ENCODE measurements at regions of chr1 and their contacts with region 1.

Region 1: GRCh38 chr1:51878616-51879336 is at the start of gene NRDC:
- DNase-seq: peak; percentile 99 to 100 (median 100)
- ATAC-seq: peak; percentile 83
- H3K4me3 ChIP-seq: peak within 1 kb of the TSS; percentile 78
- H3K27ac ChIP-seq: peak within 1 kb of the TSS; percentile 98
- H3K4me1 ChIP-seq: peaks cover 4 to 14% of the 10 kb centered on the region in 2 experiments; a peak in 4 of 5 replicates
- H3K27me3 ChIP-seq: no peaks in the 10 kb centered on the region
- CTCF ChIP-seq: 0 out of 6 replicates have a peak, but pooled peaks of 1 of the 3 experiments have one; percentile 7
- EP300 ChIP-seq: peak; percentile 47
- POLR2A ChIP-seq: peak; percentile 94
- RAD21 ChIP-seq: no peak
- polyA plus RNA-seq, gene NRDC: 135 to 149 TPM

Region 2: GRCh38 chr1:50968158-50968820 is 910.5 kb before region 1 on chr1:
- CTCF ChIA-PET with region 1: no interaction called
- POLR2A ChIA-PET with region 1: no interaction called
- in situ Hi-C with region 1: no loop called
- intact Hi-C with region 1: loop called (anchors 5 kb)
- DNase-seq: peak; percentile 93 to 97 (median 96)
- ATAC-seq: peak; percentile 75
- H3K4me3 ChIP-seq: peak overlapping the region; percentile 78
- H3K27ac ChIP-seq: peak overlapping the region; percentile 92
- H3K4me1 ChIP-seq: peaks cover 3 to 15% of the 10 kb centered on the region in 2 experiments; a peak in 3 of 5 replicates
- H3K27me3 ChIP-seq: no peaks in the 10 kb centered on the region
- CTCF ChIP-seq: peak; percentile 42 to 67 (median 59); a peak in 4 of 6 replicates
- EP300 ChIP-seq: peak; percentile 55
- POLR2A ChIP-seq: peak; percentile 89
- RAD21 ChIP-seq: peak; percentile 40 to 50; a peak in 3 of 4 replicates

Region 3: GRCh38 chr1:51814513-51814912 is 64.3 kb before region 1 on chr1:
- CTCF ChIA-PET with region 1: no interaction called
- POLR2A ChIA-PET with region 1: no interaction called
- in situ Hi-C with region 1: no loop called
- intact Hi-C with region 1: loop called (anchors 5 kb)
- DNase-seq: no peak
- ATAC-seq: no peak
- H3K4me3 ChIP-seq: no peak overlapping the region
- H3K27ac ChIP-seq: no peak overlapping the region
- H3K4me1 ChIP-seq: no peaks in the 10 kb centered on the region
- H3K27me3 ChIP-seq: no peaks in the 10 kb centered on the region
- CTCF ChIP-seq: no peak
- EP300 ChIP-seq: no peak
- POLR2A ChIP-seq: no peak
- RAD21 ChIP-seq: no peak

Region 4: DNA sequence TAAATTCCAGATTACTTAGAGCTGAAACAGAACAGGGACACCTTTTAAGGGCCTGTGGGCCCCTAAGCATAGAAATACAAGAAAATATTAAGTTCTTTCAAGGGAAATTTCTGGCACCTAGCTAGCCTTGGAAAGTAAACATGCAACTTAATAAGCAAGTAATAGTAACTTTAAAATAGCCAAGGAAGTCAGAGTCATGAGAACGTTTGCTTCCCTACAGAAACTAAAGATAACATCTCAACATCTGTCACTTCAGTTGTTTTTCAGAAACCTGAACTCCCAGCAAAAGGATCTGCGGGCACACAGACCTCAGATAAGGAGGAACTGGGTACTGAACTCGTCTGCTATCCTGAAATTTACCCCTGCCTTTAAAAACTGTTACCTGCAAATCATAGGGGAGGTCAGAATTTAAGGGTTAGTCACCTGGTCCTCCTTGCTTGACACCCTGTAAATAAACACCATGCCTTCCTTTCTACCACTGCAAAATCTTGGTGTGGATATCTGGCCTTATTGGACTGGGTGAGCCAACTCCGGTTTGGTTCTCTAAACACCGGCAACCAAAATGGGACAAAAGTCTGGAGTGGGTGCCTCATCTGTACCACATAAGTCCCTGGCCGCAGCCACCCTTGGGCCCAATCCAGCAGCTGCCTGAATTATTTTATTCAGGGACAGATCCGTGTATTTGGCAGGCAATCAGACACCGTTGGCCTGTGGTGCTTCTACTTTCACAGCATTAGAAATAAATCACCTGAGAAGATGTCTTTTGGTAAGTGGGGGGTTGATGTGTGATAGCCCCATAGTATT is 28.2 kb before region 1 on chr1:
- CTCF ChIA-PET with region 1: no interaction called
- POLR2A ChIA-PET with region 1: interaction called, 12 read pairs
- in situ Hi-C with region 1: no loop called
- intact Hi-C with region 1: loop called (anchors 2 kb)
- DNase-seq: peak in 3 of 4 experiments; percentile 28 to 83 (median 51)
- ATAC-seq: peak; percentile 78
- H3K4me3 ChIP-seq: 0 out of 2 replicates have a peak overlapping the region, but pooled peaks have one; percentile 5
- H3K27ac ChIP-seq: peak overlapping the region; percentile 78
- H3K4me1 ChIP-seq: peaks cover 4 to 22% of the 10 kb centered on the region in 2 experiments; a peak in 4 of 5 replicates
- H3K27me3 ChIP-seq: no peaks in the 10 kb centered on the region
- CTCF ChIP-seq: no peak
- EP300 ChIP-seq: peak; percentile 90
- POLR2A ChIP-seq: 0 out of 2 replicates have a peak, but pooled peaks have one; percentile 7
- RAD21 ChIP-seq: no peak

Region 5: GRCh38 chr1:51897699-51898031 is 18.9 kb after region 1 on chr1:
- CTCF ChIA-PET with region 1: no interaction called
- POLR2A ChIA-PET with region 1: interaction called, 11 read pairs
- in situ Hi-C with region 1: no loop called
- intact Hi-C with region 1: no loop called
- DNase-seq: no peak
- ATAC-seq: no peak
- H3K4me3 ChIP-seq: no peak overlapping the region
- H3K27ac ChIP-seq: no peak overlapping the region
- H3K4me1 ChIP-seq: no peaks in the 10 kb centered on the region; a peak in 1 of 5 replicates
- H3K27me3 ChIP-seq: peaks cover 0 to 20% of the 10 kb centered on the region in 2 experiments; a peak in 3 of 5 replicates
- CTCF ChIP-seq: no peak
- EP300 ChIP-seq: no peak
- POLR2A ChIP-seq: no peak
- RAD21 ChIP-seq: no peak

Measured in K562 (cell line).